CD4-positive, alpha-beta T cell (primary cell): ENCODE measurements at regions of chrX and their contacts with region 1.

Region 1: DNA sequence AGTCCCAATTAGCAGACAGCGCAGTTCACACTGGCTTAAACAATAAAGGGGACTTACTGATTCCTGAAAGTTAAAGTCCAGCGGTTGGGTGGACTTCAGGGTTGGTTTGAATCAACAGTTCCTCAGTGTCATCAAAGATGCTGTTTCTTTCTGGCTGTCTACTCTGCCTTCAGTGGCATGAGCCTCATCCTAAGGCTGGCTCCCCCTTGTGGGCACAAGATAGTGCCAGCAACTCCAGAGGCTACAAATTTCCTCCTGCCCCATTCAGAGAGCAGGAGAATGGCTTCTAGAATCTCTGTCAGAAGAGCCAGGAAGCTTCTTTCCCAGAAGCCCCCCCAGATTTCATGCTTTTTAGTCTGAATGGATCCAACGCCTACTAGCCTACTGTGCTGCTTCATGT is 82.4 kb upstream of the MTM1 start:
- DNase-seq: peak; percentile 1 to 72 (median 32)
- ATAC-seq: peak; percentile 66
- H3K4me3 ChIP-seq: no peak overlapping the region
- H3K4me3 Mint-ChIP-seq: no peak overlapping the region
- H3K27ac ChIP-seq: no peak overlapping the region
- H3K27ac Mint-ChIP-seq: no peak overlapping the region
- H3K4me1 ChIP-seq: no peaks in the 10 kb centered on the region
- H3K4me1 Mint-ChIP-seq: no peaks in the 10 kb centered on the region
- H3K27me3 ChIP-seq: no peaks in the 10 kb centered on the region
- H3K27me3 Mint-ChIP-seq: no peaks in the 10 kb centered on the region
- CTCF ChIP-seq: peak; percentile 40

Region 2: DNA sequence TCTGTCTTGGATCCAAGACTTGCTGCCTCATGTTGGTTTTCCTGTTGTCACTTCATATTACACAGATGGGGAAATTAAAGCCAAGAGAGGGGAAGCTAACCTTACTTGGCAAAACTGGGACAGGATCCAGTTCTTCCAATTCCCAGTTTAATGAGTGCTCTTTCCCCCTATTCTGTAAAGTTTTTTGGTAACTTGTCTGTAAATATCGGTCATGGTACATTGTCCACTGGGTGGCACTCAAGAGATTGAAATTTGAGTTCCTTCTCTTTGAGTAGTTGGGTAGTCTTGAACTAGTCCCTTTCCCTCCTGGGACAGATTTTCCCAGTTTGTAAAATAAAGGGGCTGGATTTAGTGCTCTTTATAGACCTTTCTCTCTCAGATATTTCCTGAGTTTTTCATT is 535.3 kb before region 1 on chrX:
- CTCF ChIA-PET with region 1: no interaction called
- POLR2A ChIA-PET with region 1: no interaction called
- intact Hi-C with region 1: loop called in 1 of 2 experiments (anchors 5 kb)
- DNase-seq: peak in 4 of 14 experiments; percentile 5 to 39 (median 26)
- ATAC-seq: no peak
- H3K4me3 ChIP-seq: no peak overlapping the region
- H3K4me3 Mint-ChIP-seq: no peak overlapping the region
- H3K27ac ChIP-seq: no peak overlapping the region
- H3K27ac Mint-ChIP-seq: no peak overlapping the region
- H3K4me1 ChIP-seq: no peaks in the 10 kb centered on the region
- H3K4me1 Mint-ChIP-seq: no peaks in the 10 kb centered on the region
- H3K27me3 ChIP-seq: no peaks in the 10 kb centered on the region
- H3K27me3 Mint-ChIP-seq: no peaks in the 10 kb centered on the region
- CTCF ChIP-seq: no peak

Region 3: DNA sequence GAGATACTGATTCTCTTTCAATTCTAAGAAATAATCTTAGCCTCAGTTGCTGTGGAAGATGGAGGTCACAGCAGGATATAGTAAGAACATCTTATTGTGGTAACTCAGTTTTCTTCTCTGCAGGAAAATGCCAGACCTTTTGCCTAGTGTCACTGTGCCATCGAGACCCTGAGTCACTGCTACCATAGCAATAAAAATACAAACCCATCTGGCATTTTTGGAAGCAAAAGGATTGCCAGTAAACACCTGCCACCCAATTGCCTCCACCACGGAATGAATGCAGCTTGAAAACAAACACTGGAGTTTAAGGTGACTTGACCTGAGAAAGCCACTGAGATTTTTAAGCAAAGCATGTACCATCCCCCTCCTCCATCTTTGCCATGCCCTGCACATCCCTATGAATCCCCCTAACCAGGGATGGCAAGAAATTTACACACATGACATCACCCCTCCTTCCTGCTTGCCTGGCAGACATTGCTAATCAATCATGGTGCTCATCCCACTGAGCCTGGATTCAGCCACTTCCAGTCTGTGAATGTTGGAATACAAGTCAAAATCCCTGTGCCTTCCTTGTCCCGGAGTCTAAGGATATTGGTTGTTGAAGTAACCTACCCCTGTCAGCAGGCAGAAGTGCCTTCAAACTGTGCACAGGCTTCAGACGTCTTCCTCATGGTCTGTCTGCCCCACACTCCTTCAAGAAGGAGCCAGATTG is 182.5 kb before region 1 on chrX:
- CTCF ChIA-PET with region 1: no interaction called
- POLR2A ChIA-PET with region 1: no interaction called
- intact Hi-C with region 1: no loop called
- DNase-seq: no peak
- ATAC-seq: no peak
- H3K4me3 ChIP-seq: no peak overlapping the region
- H3K4me3 Mint-ChIP-seq: no peak overlapping the region
- H3K27ac ChIP-seq: no peak overlapping the region
- H3K27ac Mint-ChIP-seq: no peak overlapping the region
- H3K4me1 ChIP-seq: no peaks in the 10 kb centered on the region
- H3K4me1 Mint-ChIP-seq: no peaks in the 10 kb centered on the region
- H3K27me3 ChIP-seq: no peaks in the 10 kb centered on the region
- H3K27me3 Mint-ChIP-seq: no peaks in the 10 kb centered on the region
- CTCF ChIP-seq: no peak

Region 4: GRCh38 chrX:150365051-150365989 is 120.7 kb before region 1 on chrX:
- CTCF ChIA-PET with region 1: interaction called, 6 read pairs
- POLR2A ChIA-PET with region 1: no interaction called
- intact Hi-C with region 1: loop called (anchors 5 to 10 kb)
- DNase-seq: peak; percentile 19 to 78 (median 54)
- ATAC-seq: peak; percentile 30
- H3K4me3 ChIP-seq: peak overlapping the region; percentile 67
- H3K4me3 Mint-ChIP-seq: peak overlapping the region; percentile 91
- H3K27ac ChIP-seq: no peak overlapping the region
- H3K27ac Mint-ChIP-seq: peak overlapping the region; percentile 58
- H3K4me1 ChIP-seq: peaks cover 42% of the 10 kb centered on the region
- H3K4me1 Mint-ChIP-seq: peaks cover 29% of the 10 kb centered on the region
- H3K27me3 ChIP-seq: peaks cover 4 to 14% of the 10 kb centered on the region in 2 experiments
- H3K27me3 Mint-ChIP-seq: peaks cover 19% of the 10 kb centered on the region
- CTCF ChIP-seq: peak; percentile 47

Region 5: GRCh38 chrX:150372280-150372679 is 113.7 kb before region 1 on chrX:
- CTCF ChIA-PET with region 1: no interaction called
- POLR2A ChIA-PET with region 1: no interaction called
- intact Hi-C with region 1: loop called (anchors 5 to 10 kb)
- DNase-seq: no peak
- ATAC-seq: no peak
- H3K4me3 ChIP-seq: no peak overlapping the region
- H3K4me3 Mint-ChIP-seq: no peak overlapping the region
- H3K27ac ChIP-seq: no peak overlapping the region
- H3K27ac Mint-ChIP-seq: no peak overlapping the region
- H3K4me1 ChIP-seq: no peaks in the 10 kb centered on the region
- H3K4me1 Mint-ChIP-seq: no peaks in the 10 kb centered on the region
- H3K27me3 ChIP-seq: no peaks in the 10 kb centered on the region
- H3K27me3 Mint-ChIP-seq: no peaks in the 10 kb centered on the region
- CTCF ChIP-seq: no peak

Region 6: DNA sequence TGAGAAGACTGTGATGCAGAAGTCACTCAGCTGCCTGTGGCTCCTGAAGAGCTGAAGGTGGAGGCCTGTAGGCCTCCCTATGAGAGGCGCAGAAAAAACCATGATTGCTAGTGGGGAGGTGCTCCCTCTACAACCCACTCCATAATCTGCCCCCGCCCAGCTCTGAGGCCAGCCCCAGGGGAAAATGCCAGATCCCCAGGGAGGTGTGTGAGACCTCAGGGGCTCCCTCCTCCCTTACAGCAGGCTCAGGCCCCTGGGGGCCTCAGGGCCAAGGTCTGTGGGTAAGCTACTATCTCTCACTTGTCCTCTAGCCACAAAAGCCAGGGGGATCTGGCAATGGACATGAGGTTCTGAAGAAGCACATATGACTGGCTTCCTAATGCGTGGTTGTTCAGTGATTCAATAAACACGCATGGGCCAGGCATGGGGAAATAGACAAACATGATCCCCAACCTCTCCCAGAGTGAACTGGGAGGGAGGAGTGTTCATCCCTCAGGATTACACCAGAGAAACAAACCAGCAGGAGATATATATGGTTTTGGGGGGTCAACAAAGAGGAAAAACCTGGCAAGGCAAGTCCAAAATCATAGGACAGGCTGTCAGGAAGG is 31.4 kb after region 1 on chrX:
- CTCF ChIA-PET with region 1: no interaction called
- POLR2A ChIA-PET with region 1: no interaction called
- intact Hi-C with region 1: no loop called
- DNase-seq: no peak
- ATAC-seq: no peak
- H3K4me3 ChIP-seq: no peak overlapping the region
- H3K4me3 Mint-ChIP-seq: no peak overlapping the region
- H3K27ac ChIP-seq: no peak overlapping the region
- H3K27ac Mint-ChIP-seq: no peak overlapping the region
- H3K4me1 ChIP-seq: no peaks in the 10 kb centered on the region
- H3K4me1 Mint-ChIP-seq: no peaks in the 10 kb centered on the region
- H3K27me3 ChIP-seq: no peaks in the 10 kb centered on the region
- H3K27me3 Mint-ChIP-seq: no peaks in the 10 kb centered on the region
- CTCF ChIP-seq: no peak

Region 7: GRCh38 chrX:150587585-150588503 is 101.8 kb after region 1 on chrX:
- CTCF ChIA-PET with region 1: no interaction called
- POLR2A ChIA-PET with region 1: no interaction called
- intact Hi-C with region 1: loop called in 1 of 2 experiments (anchors 10 kb)
- DNase-seq: peak; percentile 18 to 69 (median 38)
- ATAC-seq: peak; percentile 51
- H3K4me3 ChIP-seq: no peak overlapping the region
- H3K4me3 Mint-ChIP-seq: no peak overlapping the region
- H3K27ac ChIP-seq: no peak overlapping the region
- H3K27ac Mint-ChIP-seq: no peak overlapping the region
- H3K4me1 ChIP-seq: no peaks in the 10 kb centered on the region
- H3K4me1 Mint-ChIP-seq: peaks cover 39% of the 10 kb centered on the region
- H3K27me3 ChIP-seq: no peaks in the 10 kb centered on the region
- H3K27me3 Mint-ChIP-seq: no peaks in the 10 kb centered on the region
- CTCF ChIP-seq: peak; percentile 77

Region 8: GRCh38 chrX:150683536-150684146 is 197.6 kb after region 1 on chrX:
- CTCF ChIA-PET with region 1: no interaction called
- POLR2A ChIA-PET with region 1: no interaction called
- intact Hi-C with region 1: no loop called
- DNase-seq: peak in 4 of 14 experiments; percentile 44 to 78 (median 72)
- ATAC-seq: peak; percentile 54
- H3K4me3 ChIP-seq: no peak overlapping the region
- H3K4me3 Mint-ChIP-seq: no peak overlapping the region
- H3K27ac ChIP-seq: no peak overlapping the region
- H3K27ac Mint-ChIP-seq: no peak overlapping the region
- H3K4me1 ChIP-seq: peaks cover 12% of the 10 kb centered on the region
- H3K4me1 Mint-ChIP-seq: peaks cover 12% of the 10 kb centered on the region
- H3K27me3 ChIP-seq: no peaks in the 10 kb centered on the region
- H3K27me3 Mint-ChIP-seq: no peaks in the 10 kb centered on the region
- CTCF ChIP-seq: peak; percentile 61